PC-3 (cell line): ENCODE measurements at regions of chr1 and their contacts with region 1.

Region 1: DNA sequence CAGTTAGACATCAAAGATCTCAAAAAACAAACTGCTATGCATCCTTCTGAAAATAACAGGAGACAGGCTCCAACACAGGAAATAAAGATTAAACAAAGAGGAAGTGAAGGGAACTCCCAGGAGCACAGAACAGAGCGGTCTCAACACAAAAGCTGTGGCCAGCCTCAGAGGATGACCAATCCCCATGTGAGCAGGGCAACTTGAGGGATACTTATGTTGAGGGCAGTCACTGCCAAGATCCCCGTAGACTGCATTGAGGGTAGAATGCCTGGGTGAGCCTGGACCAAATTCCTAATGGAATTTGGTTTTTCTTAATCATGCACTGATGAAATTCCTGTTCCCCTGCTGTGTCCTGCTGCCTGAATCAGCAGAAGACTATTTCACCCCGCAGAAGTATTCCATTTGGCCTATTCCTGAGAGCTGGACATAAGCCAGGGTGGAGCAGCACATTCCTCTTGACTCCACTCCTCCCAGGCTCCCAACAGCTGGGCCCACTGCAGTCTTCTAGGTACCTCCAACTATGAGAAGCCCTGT is 49.0 kb downstream of the JAK1 start:
- DNase-seq: peak; percentile 85
- ATAC-seq: peak; percentile 54
- H3K4me3 ChIP-seq: no peak overlapping the region
- H3K27ac ChIP-seq: peak overlapping the region; percentile 83
- H3K4me1 ChIP-seq: peaks cover 58% of the 10 kb centered on the region
- H3K27me3 ChIP-seq: no peaks in the 10 kb centered on the region
- CTCF ChIP-seq: no peak

Region 2: GRCh38 chr1:64898107-64898845 is 19.1 kb before region 1 on chr1:
- CTCF ChIA-PET with region 1: no interaction called
- POLR2A ChIA-PET with region 1: interaction called, 9 read pairs
- intact Hi-C with region 1: loop called (anchors 1 kb)
- DNase-seq: peak; percentile 96
- ATAC-seq: peak; percentile 97
- H3K4me3 ChIP-seq: peak overlapping the region; percentile 39; the same call in 1 of the 2 replicates
- H3K27ac ChIP-seq: peak overlapping the region; percentile 97
- H3K4me1 ChIP-seq: peaks cover 34% of the 10 kb centered on the region
- H3K27me3 ChIP-seq: no peaks in the 10 kb centered on the region
- CTCF ChIP-seq: no peak